Activated CD4-positive, alpha-beta memory T cell treated with anti-CD3 and anti-CD28 coated beads for 36 hours (primary cell): ENCODE measurements at regions of chr13 and their contacts with region 1.

Region 1: GRCh38 chr13:41061075-41061913 is at the start of gene WBP4:
- DNase-seq: peak; percentile 92
- H3K4me3 Mint-ChIP-seq: peak within 1 kb of the TSS; percentile 97
- H3K27ac Mint-ChIP-seq: peak within 1 kb of the TSS; percentile 99
- H3K4me1 Mint-ChIP-seq: peaks cover 44% of the 10 kb centered on the region
- H3K27me3 Mint-ChIP-seq: no peaks in the 10 kb centered on the region
- total RNA-seq, gene WBP4: 12.6 to 13.5 TPM

Region 2: DNA sequence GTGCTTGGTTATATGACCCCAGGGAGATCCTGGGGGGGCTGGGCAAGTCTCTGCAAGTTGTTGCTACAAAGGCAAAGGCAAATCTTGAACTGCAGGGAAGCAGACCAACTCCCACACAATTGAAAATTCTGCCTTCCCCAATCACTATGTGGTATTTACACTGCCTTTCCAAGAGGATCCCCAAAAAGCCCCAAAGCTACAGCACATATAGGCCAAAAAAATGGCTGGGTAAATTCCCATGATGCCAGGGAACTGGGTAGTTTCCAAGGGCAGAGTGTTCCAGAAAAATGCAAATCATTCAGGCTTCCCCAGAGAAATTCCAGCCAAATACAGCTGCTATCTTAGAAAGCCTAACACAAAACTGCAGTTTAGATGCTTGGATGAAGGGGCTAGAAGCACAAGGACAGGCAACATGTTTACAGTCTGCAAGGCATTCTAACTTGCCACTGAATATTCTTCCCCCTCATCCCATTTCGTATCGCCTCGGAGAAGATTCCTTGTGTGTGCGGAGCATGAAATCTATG is 401.1 kb before region 1 on chr13:
- CTCF ChIA-PET with region 1: no interaction called
- POLR2A ChIA-PET with region 1: no interaction called
- intact Hi-C with region 1: no loop called
- DNase-seq: no peak
- H3K4me3 Mint-ChIP-seq: no peak overlapping the region
- H3K27ac Mint-ChIP-seq: peak overlapping the region; percentile 43
- H3K4me1 Mint-ChIP-seq: peaks cover 71% of the 10 kb centered on the region
- H3K27me3 Mint-ChIP-seq: no peaks in the 10 kb centered on the region

Region 3: DNA sequence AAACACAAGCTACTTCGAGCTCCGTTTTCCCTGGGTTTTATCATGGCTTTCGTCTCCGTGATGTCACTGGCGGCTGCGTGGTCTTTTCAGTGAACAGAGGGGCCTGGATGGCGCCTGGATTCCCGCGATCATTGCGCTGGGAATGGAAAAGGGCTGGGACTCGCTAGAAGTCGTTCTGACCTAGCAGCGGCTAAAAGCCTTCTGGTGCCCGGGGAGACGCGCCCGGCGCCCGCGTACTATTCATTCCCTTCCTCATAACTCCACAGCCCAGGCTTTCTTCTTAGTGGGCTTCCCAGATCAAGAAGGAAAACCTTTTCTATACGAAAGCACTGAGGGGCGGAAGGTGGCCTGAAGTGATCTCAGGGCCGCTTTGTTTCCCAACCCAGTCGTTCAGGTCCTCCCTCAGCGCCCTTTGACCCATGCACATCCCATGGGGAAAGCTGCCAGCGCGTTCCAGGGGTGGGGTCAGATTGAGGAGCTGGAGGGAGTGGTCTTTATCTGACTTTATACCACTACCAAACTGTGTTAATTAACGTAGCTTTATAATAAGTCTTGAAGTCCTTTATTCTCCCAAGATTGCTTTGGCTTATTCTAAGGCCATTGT is 138.8 kb before region 1 on chr13:
- CTCF ChIA-PET with region 1: interaction called, 8 read pairs
- POLR2A ChIA-PET with region 1: no interaction called
- intact Hi-C with region 1: loop called (anchors 2 kb)
- DNase-seq: no peak
- H3K4me3 Mint-ChIP-seq: peak overlapping the region; percentile 68
- H3K27ac Mint-ChIP-seq: peak overlapping the region; percentile 60
- H3K4me1 Mint-ChIP-seq: peaks cover 15% of the 10 kb centered on the region
- H3K27me3 Mint-ChIP-seq: no peaks in the 10 kb centered on the region

Region 4: DNA sequence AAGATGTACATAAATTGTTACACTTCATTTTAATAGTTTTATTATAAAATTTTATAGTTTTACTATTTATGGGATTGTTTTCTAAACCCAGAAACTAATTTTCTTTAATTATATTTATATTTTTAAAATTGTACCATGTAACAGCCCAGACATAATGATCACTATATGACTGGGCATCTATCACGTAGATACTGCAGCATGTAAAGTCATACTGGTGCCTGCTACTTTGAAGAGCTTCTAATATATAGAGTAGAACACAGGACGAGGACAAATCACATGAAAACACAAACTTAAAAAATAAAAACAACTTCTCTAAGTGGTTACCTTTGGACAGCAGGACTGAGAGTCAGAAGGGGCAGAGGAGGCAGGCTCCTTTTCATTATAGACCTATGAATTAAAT is 47.5 kb before region 1 on chr13:
- CTCF ChIA-PET with region 1: interaction called, 5 read pairs
- POLR2A ChIA-PET with region 1: interaction called, 13 read pairs
- intact Hi-C with region 1: loop called (anchors 1 kb)
- DNase-seq: no peak
- H3K4me3 Mint-ChIP-seq: peak overlapping the region; percentile 46
- H3K27ac Mint-ChIP-seq: peak overlapping the region; percentile 97
- H3K4me1 Mint-ChIP-seq: peaks cover 51% of the 10 kb centered on the region
- H3K27me3 Mint-ChIP-seq: no peaks in the 10 kb centered on the region

Region 5: DNA sequence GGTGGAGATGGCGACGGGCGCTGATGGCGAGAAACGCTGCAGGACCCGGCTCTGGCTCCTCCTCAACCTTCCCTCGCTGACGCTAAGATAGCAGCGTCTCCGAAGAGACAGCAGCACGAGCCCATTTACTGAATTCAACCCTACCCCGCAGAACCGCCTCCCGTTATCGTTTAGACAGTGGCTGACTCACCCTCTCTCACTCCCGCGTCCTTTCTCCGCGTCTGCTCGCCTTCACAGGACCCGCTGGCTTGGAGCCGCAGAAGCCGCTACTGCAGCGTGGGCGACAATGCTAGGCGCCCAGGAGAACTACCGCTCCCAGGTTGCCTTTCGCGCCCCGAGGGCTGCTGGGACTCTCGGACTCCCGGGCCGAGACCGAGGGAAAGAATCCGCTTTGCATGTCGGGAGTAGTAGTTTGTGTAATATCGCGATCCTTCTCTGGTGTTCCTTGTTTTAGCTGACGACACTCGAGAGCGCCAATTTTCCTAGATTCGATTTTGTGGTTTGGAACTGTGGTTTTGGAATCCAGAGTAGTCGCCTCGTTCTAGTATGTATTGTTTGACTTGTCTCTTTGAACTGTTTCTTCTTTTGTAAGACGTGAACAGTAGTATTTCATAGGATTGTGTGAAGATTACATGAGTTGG is 71.3 kb after region 1 on chr13 and contains the start of gene KBTBD6:
- CTCF ChIA-PET with region 1: no interaction called
- POLR2A ChIA-PET with region 1: interaction called, 4 read pairs
- intact Hi-C with region 1: loop called (anchors 1 kb)
- DNase-seq: peak; percentile 98
- H3K4me3 Mint-ChIP-seq: peak within 1 kb of the TSS; percentile 92
- H3K27ac Mint-ChIP-seq: peak within 1 kb of the TSS; percentile 86
- H3K4me1 Mint-ChIP-seq: peaks cover 43% of the 10 kb centered on the region
- H3K27me3 Mint-ChIP-seq: no peaks in the 10 kb centered on the region
- total RNA-seq, gene KBTBD6: 3.6 to 4.2 TPM

Region 6: DNA sequence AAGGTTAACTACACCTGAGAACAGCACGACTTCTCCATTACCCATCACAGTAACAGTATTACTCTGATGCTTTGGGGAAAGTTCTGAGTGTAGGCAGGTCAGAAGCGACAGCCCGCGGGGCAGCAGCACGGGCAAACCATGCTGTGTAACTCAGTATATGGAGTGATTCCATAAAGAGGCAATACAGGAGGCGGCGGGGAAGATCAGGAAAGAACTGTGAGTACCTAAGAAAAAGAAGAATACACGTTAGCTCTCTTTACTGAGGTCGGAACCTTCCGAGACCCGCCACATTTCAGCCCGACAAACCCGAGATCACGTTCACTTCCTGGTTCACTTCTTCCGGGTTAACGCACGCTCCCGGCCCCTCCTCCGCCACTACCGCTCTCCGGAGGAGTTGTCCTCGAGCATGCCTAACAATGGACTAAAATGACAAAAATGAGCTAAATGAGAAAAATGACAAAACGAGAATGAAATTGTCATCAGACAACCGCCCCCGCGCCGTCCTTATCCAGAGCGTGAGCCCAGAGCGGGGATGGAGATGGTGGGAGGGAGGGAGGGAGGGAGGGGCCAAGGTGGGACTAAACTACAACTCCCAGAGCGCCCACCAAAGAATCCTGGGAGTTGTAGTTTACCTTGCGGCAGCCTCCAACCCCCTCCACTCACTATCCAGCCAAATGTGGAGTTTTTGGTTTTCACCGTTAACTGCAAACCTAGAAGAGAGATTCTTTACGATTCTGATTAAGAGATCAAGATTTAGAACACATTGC is 202.2 kb after region 1 on chr13 and contains the start of gene MTRF1:
- CTCF ChIA-PET with region 1: no interaction called
- POLR2A ChIA-PET with region 1: interaction called, 4 read pairs
- intact Hi-C with region 1: loop called (anchors 1 kb)
- DNase-seq: peak; percentile 84
- H3K4me3 Mint-ChIP-seq: peak within 1 kb of the TSS; percentile 90
- H3K27ac Mint-ChIP-seq: peak within 1 kb of the TSS; percentile 96
- H3K4me1 Mint-ChIP-seq: peaks cover 13% of the 10 kb centered on the region
- H3K27me3 Mint-ChIP-seq: no peaks in the 10 kb centered on the region
- total RNA-seq, gene MTRF1: 16.2 to 21.5 TPM

Region 7: DNA sequence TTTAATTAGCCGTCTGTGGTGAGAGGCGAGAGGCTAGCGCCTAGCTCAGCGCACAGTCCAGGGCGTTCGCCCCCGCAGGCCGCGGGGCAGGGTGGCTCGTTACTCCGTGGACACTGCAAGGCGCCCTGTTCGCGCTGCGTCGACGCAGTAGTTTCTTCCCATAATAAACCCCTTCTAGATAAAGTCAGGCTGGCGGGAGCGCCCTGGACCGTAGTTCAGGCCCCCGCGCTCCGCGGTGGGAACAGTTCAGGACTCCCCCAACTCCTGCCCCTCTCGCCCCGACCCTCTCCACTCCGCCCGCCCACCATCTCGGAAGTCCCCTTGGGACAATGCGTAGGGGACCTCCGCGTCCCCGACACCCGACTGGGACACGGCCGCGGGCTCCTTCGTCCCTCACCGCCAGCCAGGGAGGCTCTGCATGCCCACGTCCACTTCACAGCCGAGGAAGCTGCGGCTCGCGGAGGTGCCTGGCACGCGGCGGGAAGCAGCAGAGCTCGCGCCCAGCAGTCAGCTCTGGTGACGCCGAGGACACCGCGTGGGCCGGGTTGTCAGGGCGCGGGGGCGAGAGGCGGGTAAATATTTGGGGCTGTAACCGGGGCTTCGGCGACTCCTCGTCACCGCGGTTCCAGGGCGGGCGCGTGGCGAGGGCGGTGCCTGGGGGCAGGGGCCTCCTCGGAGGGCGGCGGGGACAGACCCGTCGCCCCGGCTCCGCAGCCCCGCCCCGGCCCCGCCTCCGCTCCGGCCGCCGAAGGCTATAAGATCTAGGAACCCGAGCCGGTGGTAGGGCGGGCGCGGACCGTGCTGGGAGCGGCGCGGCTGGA is 395.7 kb after region 1 on chr13 and contains the start of gene RGCC:
- CTCF ChIA-PET with region 1: interaction called, 4 read pairs
- POLR2A ChIA-PET with region 1: no interaction called
- intact Hi-C with region 1: loop called (anchors 2 kb)
- DNase-seq: peak; percentile 97
- H3K4me3 Mint-ChIP-seq: peak within 1 kb of the TSS; percentile 87
- H3K27ac Mint-ChIP-seq: peak within 1 kb of the TSS; percentile 97
- H3K4me1 Mint-ChIP-seq: peaks cover 41% of the 10 kb centered on the region
- H3K27me3 Mint-ChIP-seq: peaks cover 2% of the 10 kb centered on the region
- total RNA-seq, gene RGCC: 94.8 to 96.8 TPM